Calu3 (cell line): ENCODE measurements at regions of chr7 and their contacts with region 1.

Region 1: DNA sequence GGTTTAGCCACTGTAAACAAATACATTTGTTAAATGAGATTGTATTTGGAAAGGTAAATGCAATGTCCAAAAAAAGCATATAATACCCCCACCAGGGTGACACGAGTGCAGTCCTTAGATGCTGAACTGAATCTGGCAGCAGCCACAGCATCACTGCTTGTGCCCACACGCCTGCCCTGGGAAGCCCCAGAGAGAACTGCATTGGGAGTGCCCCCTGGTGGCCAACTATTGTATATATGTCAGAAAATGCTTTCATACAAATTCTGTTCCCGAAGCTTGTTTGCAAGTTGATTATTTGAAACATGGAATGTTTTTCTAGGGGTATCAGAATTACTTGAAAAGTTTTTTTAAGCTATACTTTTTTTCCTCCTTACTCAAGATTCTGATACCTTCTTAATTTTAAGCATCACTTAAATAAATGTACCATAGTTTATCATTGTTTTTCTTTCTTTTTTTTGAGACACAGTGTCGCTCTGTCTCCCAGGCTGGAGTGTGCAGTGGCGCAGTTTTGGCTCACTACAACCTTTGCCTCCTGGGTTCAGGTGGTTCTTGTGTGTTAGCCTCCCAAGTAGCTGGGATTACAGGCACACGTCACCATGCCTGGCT is 50.1 kb downstream of the LANCL2 start:
- DNase-seq: peak; percentile 93
- H3K4me3 Mint-ChIP-seq: no peak overlapping the region
- H3K27ac Mint-ChIP-seq: no peak overlapping the region
- H3K4me1 Mint-ChIP-seq: no peaks in the 10 kb centered on the region
- H3K27me3 Mint-ChIP-seq: no peaks in the 10 kb centered on the region
- CTCF ChIP-seq: peak; percentile 91

Region 2: GRCh38 chr7:55036958-55037736 is 378.1 kb before region 1 on chr7:
- CTCF ChIA-PET with region 1: no interaction called
- intact Hi-C with region 1: loop called (anchors 5 kb)
- DNase-seq: no peak
- H3K4me3 Mint-ChIP-seq: no peak overlapping the region
- H3K27ac Mint-ChIP-seq: no peak overlapping the region
- H3K4me1 Mint-ChIP-seq: peaks cover 42% of the 10 kb centered on the region
- H3K27me3 Mint-ChIP-seq: no peaks in the 10 kb centered on the region
- CTCF ChIP-seq: no peak

Region 3: GRCh38 chr7:55177589-55178261 is 237.6 kb before region 1 on chr7:
- CTCF ChIA-PET with region 1: no interaction called
- intact Hi-C with region 1: no loop called
- DNase-seq: no peak
- H3K4me3 Mint-ChIP-seq: no peak overlapping the region
- H3K27ac Mint-ChIP-seq: no peak overlapping the region
- H3K4me1 Mint-ChIP-seq: no peaks in the 10 kb centered on the region
- H3K27me3 Mint-ChIP-seq: no peaks in the 10 kb centered on the region
- CTCF ChIP-seq: no peak

Region 4: DNA sequence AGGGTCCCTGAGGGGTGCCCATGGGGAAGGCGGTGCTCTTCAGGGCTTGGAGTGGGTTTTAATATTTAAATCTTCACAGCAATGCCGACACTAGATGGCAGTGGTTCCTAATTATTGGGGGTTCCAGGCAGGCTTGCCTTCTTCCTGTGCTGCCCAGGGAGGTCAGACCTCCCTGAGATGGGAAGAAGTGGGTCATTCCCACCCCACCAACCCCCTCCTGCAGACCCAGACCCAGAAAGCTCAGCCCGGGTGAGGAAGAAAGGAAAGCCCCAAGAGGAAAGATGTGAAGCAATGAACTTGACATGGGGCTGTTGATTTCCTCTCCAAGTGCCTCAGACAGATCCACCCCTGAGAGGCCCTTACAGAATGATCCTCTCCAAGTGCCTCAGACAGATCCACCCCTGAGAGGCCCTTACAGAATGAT is 135.2 kb before region 1 on chr7:
- CTCF ChIA-PET with region 1: interaction called, 8 read pairs
- intact Hi-C with region 1: loop called (anchors 1 kb)
- DNase-seq: peak; percentile 84
- H3K4me3 Mint-ChIP-seq: no peak overlapping the region
- H3K27ac Mint-ChIP-seq: no peak overlapping the region
- H3K4me1 Mint-ChIP-seq: no peaks in the 10 kb centered on the region
- H3K27me3 Mint-ChIP-seq: peaks cover 64% of the 10 kb centered on the region
- CTCF ChIP-seq: peak; percentile 89

Region 5: DNA sequence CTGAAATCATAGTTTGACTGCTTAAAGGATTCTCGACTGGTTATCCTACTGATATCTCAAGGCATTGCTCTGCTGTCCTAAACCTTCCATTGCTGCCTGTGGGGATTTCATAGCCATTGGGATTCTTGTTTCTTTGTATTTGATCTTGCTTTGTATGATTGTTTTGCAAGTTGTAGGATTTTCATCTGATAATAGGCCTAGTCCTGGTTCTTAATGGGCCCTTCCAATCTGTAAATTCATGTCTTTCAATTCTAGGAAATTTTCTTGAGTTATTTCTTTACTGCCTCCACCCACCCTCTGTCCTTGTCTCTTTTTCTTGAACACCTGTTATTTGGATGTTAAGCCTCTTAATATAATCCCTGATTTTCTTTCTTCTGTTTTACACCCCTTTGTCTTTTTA is 22.1 kb after region 1 on chr7:
- CTCF ChIA-PET with region 1: no interaction called
- intact Hi-C with region 1: no loop called
- DNase-seq: no peak
- H3K4me3 Mint-ChIP-seq: no peak overlapping the region
- H3K27ac Mint-ChIP-seq: no peak overlapping the region
- H3K4me1 Mint-ChIP-seq: no peaks in the 10 kb centered on the region
- H3K27me3 Mint-ChIP-seq: no peaks in the 10 kb centered on the region
- CTCF ChIP-seq: no peak